ENCODE measurements at regions of chr2 and their contacts with region 1.

Region 1: GRCh38 chr2:176001916-176002687 is at the start of gene LNPK:
- DNase-seq: peak; percentile 82 to 93 (median 91)
- ATAC-seq: peak; percentile 94
- H3K4me3 ChIP-seq: peak within 1 kb of the TSS; percentile 84
- H3K4me3 Mint-ChIP-seq: peak within 1 kb of the TSS; percentile 89 to 96 (median 92)
- H3K27ac ChIP-seq: peak within 1 kb of the TSS; percentile 75
- H3K27ac Mint-ChIP-seq: peak within 1 kb of the TSS; percentile 79 to 99 (median 92)
- H3K4me1 ChIP-seq: peaks cover 11 to 16% of the 10 kb centered on the region in 2 donors
- H3K4me1 Mint-ChIP-seq: peaks cover 18 to 35% (median 31%) of the 10 kb centered on the region in 7 donors
- H3K27me3 ChIP-seq: no peaks in the 10 kb centered on the region
- H3K27me3 Mint-ChIP-seq: peaks cover 0 to 9% (median 0%) of the 10 kb centered on the region in 5 donors
- total RNA-seq, gene LNPK: 19.4 to 36.8 (median 24.0) TPM

Region 2: DNA sequence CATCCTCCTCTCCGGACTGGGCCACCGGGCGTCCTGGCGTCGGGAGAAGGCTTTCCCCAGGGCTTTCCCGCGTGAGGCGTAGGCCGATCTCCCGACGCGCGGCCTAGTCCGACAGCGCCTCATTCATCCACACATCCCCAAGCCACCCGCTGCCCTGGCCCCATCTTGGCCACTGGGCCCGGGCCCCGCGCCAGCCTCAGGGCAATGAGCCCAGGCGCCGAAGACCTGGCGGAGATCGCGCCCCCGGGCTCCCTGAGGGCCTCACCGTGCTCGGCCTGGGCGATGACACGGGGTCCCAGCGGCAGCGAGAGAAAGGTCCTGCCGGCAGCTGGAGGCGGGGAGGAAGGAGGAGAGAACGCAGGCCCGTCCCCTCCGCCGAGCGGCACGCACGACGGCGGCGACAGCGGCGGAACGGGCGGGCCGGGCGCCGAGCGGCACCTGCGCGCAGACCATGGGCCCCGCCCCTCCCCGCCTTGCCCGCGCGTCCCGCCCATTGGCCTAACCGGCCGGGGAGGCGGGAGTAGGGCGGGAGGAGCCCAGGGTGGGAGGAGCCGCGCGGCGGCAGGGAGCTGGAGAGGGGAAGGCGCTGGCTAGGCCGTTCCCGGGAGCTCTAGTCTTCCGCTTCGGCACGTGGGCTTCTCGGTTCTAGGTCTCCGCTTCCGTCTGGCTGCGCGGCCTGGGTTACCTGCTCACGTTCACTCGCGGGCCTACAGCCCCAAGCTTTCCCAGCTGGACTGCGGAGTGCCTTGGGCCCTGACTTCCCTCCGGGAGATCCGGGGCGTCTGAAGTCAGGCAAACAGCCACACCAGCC is 1753.7 kb before region 1 on chr2 and contains the start of gene OLA1:
- CTCF ChIA-PET with region 1: no interaction called
- POLR2A ChIA-PET with region 1: no interaction called
- intact Hi-C with region 1: loop called (anchors 5 kb)
- DNase-seq: peak; percentile 91 to 99 (median 95)
- ATAC-seq: peak; percentile 99
- H3K4me3 ChIP-seq: peak within 1 kb of the TSS; percentile 90
- H3K4me3 Mint-ChIP-seq: peak within 1 kb of the TSS; percentile 71 to 88 (median 86)
- H3K27ac ChIP-seq: peak within 1 kb of the TSS; percentile 82
- H3K27ac Mint-ChIP-seq: peak within 1 kb of the TSS; percentile 67 to 91 (median 79)
- H3K4me1 ChIP-seq: peaks cover 6 to 12% of the 10 kb centered on the region in 2 donors
- H3K4me1 Mint-ChIP-seq: peaks cover 18 to 32% (median 25%) of the 10 kb centered on the region in 7 donors
- H3K27me3 ChIP-seq: no peaks in the 10 kb centered on the region
- H3K27me3 Mint-ChIP-seq: peaks cover 0 to 5% (median 0%) of the 10 kb centered on the region in 5 donors
- total RNA-seq, gene OLA1: 34.4 to 84.7 (median 40.3) TPM

Region 3: DNA sequence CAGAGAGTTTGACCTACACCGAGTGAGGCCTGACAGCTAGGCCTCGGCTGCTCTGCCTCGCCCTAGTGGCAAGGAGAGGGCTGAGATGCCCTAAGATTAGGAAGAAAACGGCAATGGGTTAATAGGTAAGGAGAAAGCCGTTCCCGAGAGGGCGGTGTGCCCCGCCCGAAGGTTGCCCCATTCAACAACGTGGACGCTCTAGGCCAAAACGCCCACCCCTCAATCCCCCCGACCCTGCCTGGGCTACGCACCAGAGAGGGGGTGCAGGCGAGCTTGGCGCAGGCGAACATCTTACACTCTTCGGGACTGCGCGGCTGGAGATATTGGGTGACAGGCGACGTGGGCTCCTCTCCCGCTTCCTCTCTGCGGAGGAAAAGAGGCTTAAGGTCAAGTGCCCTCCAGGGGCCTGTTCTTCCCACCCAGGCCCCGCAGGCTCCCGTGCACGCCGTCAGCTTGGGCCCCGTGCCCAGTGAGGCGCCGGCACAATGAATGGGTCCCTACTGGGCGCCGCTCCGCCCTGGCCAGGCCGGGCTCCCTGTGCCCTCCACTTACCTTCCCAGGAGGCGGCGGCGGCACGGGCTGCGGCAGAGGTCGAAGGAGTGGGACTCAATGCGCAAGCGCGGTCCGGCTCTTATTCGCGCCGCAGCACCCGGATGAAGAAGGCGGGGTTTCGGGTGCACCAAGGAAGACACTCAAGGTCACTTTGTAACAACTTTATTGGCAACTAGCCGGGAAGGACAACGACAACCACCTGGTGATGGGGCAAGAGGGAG is 820.8 kb before region 1 on chr2 and contains the start of gene ATP5MC3:
- CTCF ChIA-PET with region 1: no interaction called
- POLR2A ChIA-PET with region 1: no interaction called
- intact Hi-C with region 1: loop called in 1 of 2 experiments (anchors 5 kb)
- DNase-seq: peak; percentile 83 to 92 (median 89)
- ATAC-seq: peak; percentile 93
- H3K4me3 ChIP-seq: peak within 1 kb of the TSS; percentile 84
- H3K4me3 Mint-ChIP-seq: peak within 1 kb of the TSS; percentile 77 to 96 (median 88)
- H3K27ac ChIP-seq: peak within 1 kb of the TSS; percentile 89
- H3K27ac Mint-ChIP-seq: peak within 1 kb of the TSS; percentile 86 to 99 (median 93)
- H3K4me1 ChIP-seq: peaks cover 6 to 13% of the 10 kb centered on the region in 2 donors
- H3K4me1 Mint-ChIP-seq: peaks cover 14 to 39% (median 32%) of the 10 kb centered on the region in 7 donors
- H3K27me3 ChIP-seq: no peaks in the 10 kb centered on the region
- H3K27me3 Mint-ChIP-seq: no peaks in the 10 kb centered on the region
- total RNA-seq, gene ATP5MC3: 70.3 to 220 (median 77.6) TPM

Region 4: DNA sequence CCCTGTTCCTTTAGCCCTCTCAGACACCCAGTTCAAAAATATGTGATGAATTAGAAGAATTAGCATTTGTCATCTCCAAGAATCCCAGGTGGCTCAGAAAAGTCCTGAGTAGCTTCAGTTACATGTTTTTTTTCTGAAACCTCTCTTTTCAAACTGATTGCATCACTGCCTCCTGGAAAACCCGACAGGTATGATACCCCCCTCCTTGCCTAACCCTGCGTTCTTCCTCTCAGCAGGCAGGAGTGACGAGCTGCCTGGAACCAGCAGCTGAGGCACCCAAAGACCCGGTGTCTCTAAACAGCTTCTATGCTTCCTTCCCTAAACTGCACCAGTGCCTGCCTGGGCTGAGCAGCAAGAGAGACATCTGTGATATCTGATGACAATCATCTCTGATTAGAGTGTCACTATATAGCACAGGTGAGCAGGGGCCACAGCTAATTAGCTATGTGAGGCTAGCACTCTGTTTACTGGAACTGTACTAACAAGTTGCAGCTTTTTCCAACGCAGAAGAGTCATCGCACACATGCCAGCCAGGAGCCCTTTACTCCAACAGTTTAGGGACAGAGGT is 444.2 kb before region 1 on chr2:
- CTCF ChIA-PET with region 1: no interaction called
- POLR2A ChIA-PET with region 1: no interaction called
- intact Hi-C with region 1: no loop called
- DNase-seq: no peak
- ATAC-seq: no peak
- H3K4me3 ChIP-seq: no peak overlapping the region
- H3K4me3 Mint-ChIP-seq: no peak overlapping the region
- H3K27ac ChIP-seq: no peak overlapping the region
- H3K27ac Mint-ChIP-seq: no peak overlapping the region
- H3K4me1 ChIP-seq: no peaks in the 10 kb centered on the region
- H3K4me1 Mint-ChIP-seq: no peaks in the 10 kb centered on the region
- H3K27me3 ChIP-seq: no peaks in the 10 kb centered on the region
- H3K27me3 Mint-ChIP-seq: peaks cover 8 to 48% (median 26%) of the 10 kb centered on the region in 5 donors

Region 5: GRCh38 chr2:175823002-175823706 is 178.9 kb before region 1 on chr2:
- CTCF ChIA-PET with region 1: no interaction called
- POLR2A ChIA-PET with region 1: no interaction called
- intact Hi-C with region 1: no loop called
- DNase-seq: no peak
- ATAC-seq: no peak
- H3K4me3 ChIP-seq: no peak overlapping the region
- H3K4me3 Mint-ChIP-seq: no peak overlapping the region
- H3K27ac ChIP-seq: no peak overlapping the region
- H3K27ac Mint-ChIP-seq: no peak overlapping the region
- H3K4me1 ChIP-seq: no peaks in the 10 kb centered on the region
- H3K4me1 Mint-ChIP-seq: no peaks in the 10 kb centered on the region
- H3K27me3 ChIP-seq: no peaks in the 10 kb centered on the region
- H3K27me3 Mint-ChIP-seq: peaks cover 0 to 43% (median 34%) of the 10 kb centered on the region in 5 donors

Region 6: DNA sequence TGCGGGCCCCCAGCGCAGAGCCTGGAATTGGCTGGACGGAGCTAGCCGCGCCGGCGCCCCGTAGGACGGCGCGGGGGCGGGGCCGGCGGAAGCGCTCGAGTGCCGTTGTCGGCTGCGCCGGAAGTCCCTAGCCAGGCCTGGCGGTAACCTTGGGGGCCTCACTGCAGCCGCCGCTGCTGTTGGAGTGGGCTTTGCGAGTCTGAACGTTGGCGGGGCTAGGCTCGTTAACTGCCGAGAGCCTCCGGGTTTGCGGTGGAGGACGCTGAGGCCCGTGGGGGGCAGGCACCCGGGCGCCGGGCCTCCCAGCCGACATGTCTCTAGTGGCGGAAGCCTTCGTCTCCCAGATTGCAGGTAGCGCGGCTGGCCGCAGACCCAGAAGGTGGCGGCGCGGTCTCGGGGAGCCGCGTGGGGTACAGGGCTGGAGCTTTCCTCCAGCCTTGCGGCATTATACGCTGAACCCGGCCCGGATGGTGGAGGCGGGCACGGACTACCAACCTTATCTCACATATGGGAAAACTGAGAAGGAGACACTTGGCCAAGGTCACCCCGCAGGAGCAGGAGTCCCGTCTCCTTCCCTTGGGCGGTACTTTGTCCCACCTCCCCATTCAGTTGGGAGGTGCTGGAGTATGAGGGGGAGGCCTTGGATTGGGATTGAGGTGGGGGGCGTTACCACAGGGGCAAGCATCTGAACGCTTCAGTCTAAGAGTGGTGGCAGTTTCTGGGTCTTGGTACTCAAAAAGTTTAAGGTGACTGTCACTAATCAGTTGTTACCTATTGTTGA is 267.4 kb after region 1 on chr2 and contains the start of gene MTX2:
- CTCF ChIA-PET with region 1: no interaction called
- POLR2A ChIA-PET with region 1: no interaction called
- intact Hi-C with region 1: loop called in 1 of 2 experiments (anchors 2 kb)
- DNase-seq: peak; percentile 48 to 80 (median 75)
- ATAC-seq: peak; percentile 92
- H3K4me3 ChIP-seq: peak within 1 kb of the TSS; percentile 97
- H3K4me3 Mint-ChIP-seq: peak within 1 kb of the TSS; percentile 95 to 99 (median 97)
- H3K27ac ChIP-seq: peak within 1 kb of the TSS; percentile 84
- H3K27ac Mint-ChIP-seq: peak within 1 kb of the TSS; percentile 70 to 97 (median 92)
- H3K4me1 ChIP-seq: peaks cover 7 to 8% of the 10 kb centered on the region in 2 donors
- H3K4me1 Mint-ChIP-seq: peaks cover 16 to 46% (median 39%) of the 10 kb centered on the region in 7 donors
- H3K27me3 ChIP-seq: no peaks in the 10 kb centered on the region
- H3K27me3 Mint-ChIP-seq: peaks cover 0 to 19% (median 9%) of the 10 kb centered on the region in 5 donors
- total RNA-seq, gene MTX2: 6.6 to 14.3 (median 9.3) TPM

Region 7: DNA sequence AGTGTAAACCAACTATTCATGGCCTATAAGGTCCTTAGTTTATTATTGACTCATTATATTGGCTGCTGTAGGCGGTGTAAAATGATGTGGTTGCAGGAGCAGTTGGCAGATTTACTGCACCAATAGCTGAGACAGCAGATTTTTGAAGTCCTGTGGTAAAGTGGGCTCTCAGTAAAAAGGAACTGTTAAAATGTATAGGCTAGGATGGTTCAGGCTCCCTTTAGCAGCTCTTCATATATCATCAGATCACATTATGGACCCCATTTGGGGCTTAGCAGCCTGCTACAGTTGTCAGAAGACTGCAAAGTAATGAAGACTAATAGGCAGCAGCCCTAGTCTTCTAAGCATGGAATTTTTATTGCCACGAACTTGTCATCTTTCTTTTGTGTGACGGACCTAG is 295.0 kb after region 1 on chr2:
- CTCF ChIA-PET with region 1: no interaction called
- POLR2A ChIA-PET with region 1: no interaction called
- intact Hi-C with region 1: no loop called
- DNase-seq: no peak
- ATAC-seq: no peak
- H3K4me3 ChIP-seq: no peak overlapping the region
- H3K4me3 Mint-ChIP-seq: no peak overlapping the region
- H3K27ac ChIP-seq: no peak overlapping the region
- H3K27ac Mint-ChIP-seq: no peak overlapping the region
- H3K4me1 ChIP-seq: no peaks in the 10 kb centered on the region
- H3K4me1 Mint-ChIP-seq: peaks cover 5 to 17% (median 13%) of the 10 kb centered on the region in 7 donors
- H3K27me3 ChIP-seq: no peaks in the 10 kb centered on the region
- H3K27me3 Mint-ChIP-seq: no peaks in the 10 kb centered on the region

Region 8: GRCh38 chr2:177618255-177619253 is 1616.5 kb after region 1 on chr2:
- CTCF ChIA-PET with region 1: no interaction called
- POLR2A ChIA-PET with region 1: no interaction called
- intact Hi-C with region 1: loop called (anchors 2 to 5 kb)
- DNase-seq: peak; percentile 86 to 93 (median 91)
- ATAC-seq: peak; percentile 95
- H3K4me3 ChIP-seq: peak overlapping the region; percentile 86
- H3K4me3 Mint-ChIP-seq: peak overlapping the region; percentile 80 to 99 (median 96)
- H3K27ac ChIP-seq: peak overlapping the region; percentile 96
- H3K27ac Mint-ChIP-seq: peak overlapping the region; percentile 98 to 100 (median 99)
- H3K4me1 ChIP-seq: no peaks in the 10 kb centered on the region
- H3K4me1 Mint-ChIP-seq: peaks cover 0 to 15% (median 9%) of the 10 kb centered on the region in 7 donors
- H3K27me3 ChIP-seq: no peaks in the 10 kb centered on the region
- H3K27me3 Mint-ChIP-seq: peaks cover 0 to 35% (median 9%) of the 10 kb centered on the region in 5 donors

Measured in naive thymus-derived CD4-positive, alpha-beta T cell (primary cell).